GM12878 (cell line): ENCODE measurements at regions of chr16 and their contacts with region 1.

Region 1: GRCh38 chr16:9908613-9909012 is 273.6 kb downstream of the GRIN2A start:
- DNase-seq: no peak
- ATAC-seq: peak; percentile 21
- H3K4me3 ChIP-seq: no peak overlapping the region
- H3K27ac ChIP-seq: peak overlapping the region; percentile 27
- H3K4me1 ChIP-seq: peaks cover 16% of the 10 kb centered on the region
- H3K27me3 ChIP-seq: no peaks in the 10 kb centered on the region
- CTCF ChIP-seq: no peak
- EP300 ChIP-seq: no peak
- POLR2A ChIP-seq: no peak
- RAD21 ChIP-seq: no peak

Region 2: GRCh38 chr16:9706217-9706836 is 202.3 kb before region 1 on chr16:
- CTCF ChIA-PET with region 1: no interaction called
- POLR2A ChIA-PET with region 1: no interaction called
- RAD21 ChIA-PET with region 1: no interaction called
- SMC1A ChIA-PET with region 1: no interaction called
- in situ Hi-C with region 1: no loop called
- intact Hi-C with region 1: no loop called
- DNase-seq: no peak
- ATAC-seq: no peak
- H3K4me3 ChIP-seq: no peak overlapping the region
- H3K27ac ChIP-seq: no peak overlapping the region
- H3K4me1 ChIP-seq: no peaks in the 10 kb centered on the region
- H3K27me3 ChIP-seq: peaks cover 0 to 3% of the 10 kb centered on the region in 2 experiments; a peak in 1 of 4 replicates
- CTCF ChIP-seq: no peak
- EP300 ChIP-seq: no peak
- POLR2A ChIP-seq: no peak
- RAD21 ChIP-seq: no peak

Region 3: GRCh38 chr16:9836118-9836736 is 72.4 kb before region 1 on chr16:
- CTCF ChIA-PET with region 1: interaction called, 3 read pairs
- POLR2A ChIA-PET with region 1: interaction called, 3 read pairs
- RAD21 ChIA-PET with region 1: interaction called, 8 read pairs
- SMC1A ChIA-PET with region 1: interaction called, 7 read pairs
- in situ Hi-C with region 1: no loop called
- intact Hi-C with region 1: loop called (anchors 5 kb)
- DNase-seq: no peak
- ATAC-seq: no peak
- H3K4me3 ChIP-seq: no peak overlapping the region
- H3K27ac ChIP-seq: no peak overlapping the region
- H3K4me1 ChIP-seq: peaks cover 4% of the 10 kb centered on the region; the same call in 1 of the 2 replicates
- H3K27me3 ChIP-seq: no peaks in the 10 kb centered on the region
- CTCF ChIP-seq: no peak
- EP300 ChIP-seq: no peak
- POLR2A ChIP-seq: no peak
- RAD21 ChIP-seq: no peak